HCT116 (cell line): ENCODE measurements at regions of chr1 and their contacts with region 1.

Region 1: DNA sequence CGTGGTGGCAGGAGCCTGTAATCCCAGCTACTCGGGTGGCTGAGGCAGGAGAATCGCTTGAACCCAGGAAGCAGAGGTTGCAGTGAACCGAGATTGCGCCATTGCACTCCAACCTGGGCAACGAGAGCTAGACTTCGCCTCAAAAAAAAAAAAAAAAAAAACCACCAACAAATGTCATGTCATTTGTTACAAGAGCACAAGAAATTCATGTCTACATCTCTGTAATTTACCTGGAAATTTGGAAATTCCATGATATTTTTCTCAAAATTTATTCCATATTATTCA is 16.5 kb upstream of the VPS45 start:
- DNase-seq: no peak
- ATAC-seq: no peak
- H3K4me3 ChIP-seq: no peak overlapping the region
- H3K27ac ChIP-seq: no peak overlapping the region
- H3K4me1 ChIP-seq: peaks cover 0 to 16% of the 10 kb centered on the region in 2 experiments; a peak in 2 of 4 replicates
- H3K27me3 ChIP-seq: no peaks in the 10 kb centered on the region
- CTCF ChIP-seq: no peak
- POLR2A ChIP-seq: no peak
- RAD21 ChIP-seq: no peak

Region 2: DNA sequence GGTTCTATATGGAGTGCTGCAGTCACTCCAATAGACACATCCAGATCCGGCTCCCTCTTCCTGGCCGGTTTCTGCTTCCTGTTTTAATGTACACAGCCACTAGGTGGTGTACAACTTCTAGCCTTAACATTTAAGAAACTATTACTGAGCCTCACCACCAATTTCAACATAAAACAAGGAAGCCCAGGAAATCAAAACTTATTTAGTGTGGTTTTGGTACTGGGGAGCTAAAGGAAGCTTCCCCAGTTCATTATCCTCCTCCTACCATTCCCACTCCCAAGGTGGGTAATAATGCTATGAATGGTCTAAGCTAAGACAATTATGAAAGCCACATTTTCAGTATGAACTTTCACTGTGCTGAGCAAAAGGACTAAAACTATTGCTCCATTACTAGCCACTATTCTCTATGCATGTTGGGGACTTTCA is 88.9 kb before region 1 on chr1:
- CTCF ChIA-PET with region 1: interaction called, 14 read pairs
- POLR2A ChIA-PET with region 1: no interaction called
- RAD21 ChIA-PET with region 1: interaction called, 4 read pairs
- intact Hi-C with region 1: loop called (anchors 1 kb)
- DNase-seq: peak; percentile 58
- ATAC-seq: peak; percentile 92
- H3K4me3 ChIP-seq: no peak overlapping the region
- H3K27ac ChIP-seq: peak overlapping the region; percentile 33; the same call in 1 of the 2 replicates
- H3K4me1 ChIP-seq: no peaks in the 10 kb centered on the region
- H3K27me3 ChIP-seq: no peaks in the 10 kb centered on the region
- CTCF ChIP-seq: peak; percentile 50 to 83 (median 71); a peak in 5 of 6 replicates
- POLR2A ChIP-seq: no peak
- RAD21 ChIP-seq: peak; percentile 90

Region 3: GRCh38 chr1:149978547-149979023 is 72.4 kb before region 1 on chr1:
- CTCF ChIA-PET with region 1: no interaction called
- POLR2A ChIA-PET with region 1: no interaction called
- RAD21 ChIA-PET with region 1: no interaction called
- intact Hi-C with region 1: no loop called
- DNase-seq: no peak
- ATAC-seq: no peak
- H3K4me3 ChIP-seq: no peak overlapping the region
- H3K27ac ChIP-seq: no peak overlapping the region
- H3K4me1 ChIP-seq: peaks cover 6 to 17% of the 10 kb centered on the region in 2 experiments; a peak in 3 of 4 replicates
- H3K27me3 ChIP-seq: no peaks in the 10 kb centered on the region
- CTCF ChIP-seq: no peak
- POLR2A ChIP-seq: no peak
- RAD21 ChIP-seq: no peak

Region 4: DNA sequence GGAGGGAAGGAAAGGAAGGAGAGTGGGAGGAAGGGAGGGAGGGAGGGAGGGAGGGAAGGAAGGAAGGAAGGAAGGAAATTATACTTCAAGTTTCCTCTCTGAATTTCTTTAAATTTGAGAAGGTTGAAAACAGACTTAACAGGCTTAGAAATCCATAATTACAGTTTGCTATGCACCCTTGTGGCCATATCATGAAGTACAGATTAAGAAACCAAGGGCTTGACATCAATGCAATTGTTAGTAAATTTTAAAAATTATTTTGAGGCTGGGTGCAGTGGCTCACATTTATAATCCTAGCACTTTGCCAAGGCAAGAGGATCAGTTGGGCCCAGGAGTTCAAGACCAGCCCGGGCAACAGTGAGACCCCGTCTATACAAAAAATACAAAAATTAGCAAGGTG is 170.5 kb after region 1 on chr1:
- CTCF ChIA-PET with region 1: no interaction called
- POLR2A ChIA-PET with region 1: no interaction called
- RAD21 ChIA-PET with region 1: no interaction called
- intact Hi-C with region 1: no loop called
- DNase-seq: peak; percentile 7
- ATAC-seq: peak; percentile 63
- H3K4me3 ChIP-seq: no peak overlapping the region
- H3K27ac ChIP-seq: no peak overlapping the region
- H3K4me1 ChIP-seq: no peaks in the 10 kb centered on the region
- H3K27me3 ChIP-seq: no peaks in the 10 kb centered on the region
- CTCF ChIP-seq: peak in 2 of 3 experiments; percentile 44 to 48; a peak in 4 of 6 replicates
- POLR2A ChIP-seq: no peak
- RAD21 ChIP-seq: peak; percentile 24; the same call in 1 of the 2 replicates